H1 (cell line): ENCODE measurements at regions of chr17 and their contacts with region 1.

Region 1: GRCh38 chr17:7280519-7281429 is 744 bp upstream of the SLC2A4 start:
- DNase-seq: peak; percentile 87 to 97
- H3K4me3 ChIP-seq: peak overlapping the region; percentile 14 to 77 (median 61)
- H3K27ac ChIP-seq: no peak overlapping the region
- H3K4me1 ChIP-seq: peaks cover 0 to 20% (median 8%) of the 10 kb centered on the region in 4 experiments; a peak in 5 of 7 replicates
- H3K27me3 ChIP-seq: peaks cover 0 to 13% (median 7%) of the 10 kb centered on the region in 4 experiments; a peak in 6 of 7 replicates
- CTCF ChIP-seq: peak; percentile 94 to 100 (median 97)
- EP300 ChIP-seq: peak in 1 of 2 experiments; percentile 10; a peak in 1 of 3 replicates
- POLR2A ChIP-seq: peak in 1 of 2 experiments; percentile 79; a peak in 2 of 3 replicates
- RAD21 ChIP-seq: peak; percentile 95 to 96

Region 2: DNA sequence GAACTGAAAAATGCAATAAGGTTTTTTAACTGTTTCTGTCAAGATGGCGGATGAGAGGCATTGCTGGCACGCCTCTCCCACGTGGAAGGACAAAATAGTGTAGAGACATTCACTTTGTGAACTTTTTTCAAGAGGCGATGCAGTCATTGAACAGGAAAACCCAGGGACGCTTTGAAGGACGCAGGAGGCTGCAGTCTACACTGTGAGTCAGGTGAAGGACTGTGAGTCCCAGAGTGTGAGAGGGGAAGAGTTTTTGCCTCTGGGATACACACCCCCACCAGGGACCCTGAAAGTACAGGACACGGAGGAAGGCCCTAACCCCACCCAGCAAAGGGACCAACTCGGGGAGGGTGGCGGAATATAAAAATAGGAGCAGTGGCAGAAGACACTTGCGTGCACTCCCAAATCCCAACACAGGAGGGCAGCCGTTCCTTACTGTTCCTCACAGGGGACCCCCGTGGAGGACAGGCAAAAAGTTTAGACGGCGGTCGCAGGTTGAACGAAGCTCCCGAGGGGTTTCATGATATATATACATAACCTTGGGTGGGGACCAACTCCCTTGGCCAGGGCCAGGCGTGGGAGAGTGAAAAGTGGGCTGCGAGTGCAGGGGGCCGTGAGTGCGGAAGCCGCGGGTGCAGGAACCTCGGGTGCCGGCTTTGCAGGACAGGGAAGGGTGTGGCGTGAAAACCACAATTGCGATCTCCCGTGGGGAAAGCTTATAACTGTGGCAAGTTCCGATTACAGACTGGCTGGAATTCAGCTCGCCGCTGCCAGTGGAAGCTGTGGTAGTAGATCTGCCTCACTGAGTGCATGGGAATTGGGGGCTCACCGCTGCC is 366.9 kb before region 1 on chr17:
- CTCF ChIA-PET with region 1: no interaction called
- POLR2A ChIA-PET with region 1: no interaction called
- DNase-seq: peak; percentile 34 to 88
- H3K4me3 ChIP-seq: no peak overlapping the region
- H3K27ac ChIP-seq: no peak overlapping the region
- H3K4me1 ChIP-seq: no peaks in the 10 kb centered on the region
- H3K27me3 ChIP-seq: no peaks in the 10 kb centered on the region; a peak in 2 of 7 replicates
- CTCF ChIP-seq: peak; percentile 68 to 81 (median 77)
- EP300 ChIP-seq: no peak
- POLR2A ChIP-seq: no peak
- RAD21 ChIP-seq: peak; percentile 90

Region 3: DNA sequence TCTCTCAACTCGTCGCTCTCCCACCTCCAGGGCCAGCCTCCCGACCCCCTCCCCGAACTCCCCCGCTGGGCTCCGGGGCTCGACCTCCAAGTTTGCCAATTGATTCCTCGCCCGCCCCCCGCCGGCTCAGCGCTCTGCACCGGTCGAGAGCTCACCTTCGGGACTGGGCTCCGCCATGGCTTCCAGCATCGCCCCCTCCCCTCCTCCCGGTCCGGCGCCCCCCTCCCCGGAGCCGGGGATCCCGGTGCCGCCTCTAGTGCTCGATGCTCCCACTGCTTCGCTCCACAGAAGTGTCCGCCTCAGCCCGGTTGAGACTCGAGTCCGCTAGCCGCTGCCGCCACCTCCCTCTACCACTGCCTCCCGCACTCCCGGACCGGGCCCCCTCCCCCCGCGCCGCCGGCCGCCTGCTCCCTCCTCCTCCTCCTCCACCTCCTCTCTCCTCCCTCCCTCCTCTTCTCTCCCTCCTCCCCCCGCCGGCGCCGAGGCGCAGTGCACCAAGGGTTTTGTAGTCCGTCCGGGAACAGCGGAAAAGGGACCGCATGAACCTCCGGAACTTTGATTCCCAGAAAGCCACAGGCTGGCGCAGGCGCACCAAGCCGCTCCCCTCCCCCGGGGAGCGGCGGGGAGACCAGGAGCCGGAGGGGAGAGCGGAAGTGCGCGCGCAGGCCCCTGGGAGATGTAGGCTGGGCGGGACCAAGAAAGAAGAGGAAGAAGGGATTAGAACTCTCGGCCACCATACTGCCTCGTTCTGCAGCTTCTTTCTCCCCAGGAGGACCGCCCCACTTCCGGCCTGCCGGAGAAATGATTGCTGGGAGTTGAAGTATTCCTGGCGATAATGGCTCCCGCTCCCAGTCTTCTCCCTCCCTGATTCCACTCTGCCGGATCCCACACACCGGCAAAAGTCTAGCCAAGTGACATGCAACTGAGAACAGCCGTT is 41.4 kb before region 1 on chr17 and contains the start of gene PHF23:
- CTCF ChIA-PET with region 1: interaction called, 8 read pairs
- POLR2A ChIA-PET with region 1: interaction called, 21 read pairs
- DNase-seq: peak; percentile 94 to 99
- H3K4me3 ChIP-seq: peak within 1 kb of the TSS; percentile 91 to 97 (median 94)
- H3K27ac ChIP-seq: peak within 1 kb of the TSS; percentile 63
- H3K4me1 ChIP-seq: peaks cover 5 to 24% (median 12%) of the 10 kb centered on the region in 4 experiments
- H3K27me3 ChIP-seq: no peaks in the 10 kb centered on the region
- CTCF ChIP-seq: no peak
- EP300 ChIP-seq: no peak
- POLR2A ChIP-seq: peak; percentile 27 to 36; a peak in 1 of 3 replicates
- RAD21 ChIP-seq: no peak
- total RNA-seq, gene PHF23: 62.8 and 65.1 TPM in 2 replicates

Region 4: GRCh38 chr17:7261172-7261927 is 19.4 kb before region 1 on chr17:
- CTCF ChIA-PET with region 1: interaction called, 11 read pairs
- POLR2A ChIA-PET with region 1: interaction called, 69 read pairs
- DNase-seq: peak in 1 of 2 experiments; percentile 86
- H3K4me3 ChIP-seq: peak overlapping the region; percentile 93 to 98 (median 96)
- H3K27ac ChIP-seq: peak overlapping the region; percentile 91
- H3K4me1 ChIP-seq: peaks cover 4 to 15% (median 6%) of the 10 kb centered on the region in 4 experiments; a peak in 6 of 7 replicates
- H3K27me3 ChIP-seq: no peaks in the 10 kb centered on the region
- CTCF ChIP-seq: no peak
- EP300 ChIP-seq: peak in 1 of 2 experiments; percentile 96; a peak in 2 of 3 replicates
- POLR2A ChIP-seq: peak; percentile 72 to 91
- RAD21 ChIP-seq: no peak

Region 5: GRCh38 chr17:7296189-7296902 is 15.6 kb after region 1 on chr17:
- CTCF ChIA-PET with region 1: interaction called, 46 read pairs
- POLR2A ChIA-PET with region 1: interaction called, 94 read pairs
- DNase-seq: peak in 1 of 2 experiments; percentile 96
- H3K4me3 ChIP-seq: peak overlapping the region in 1 of 4 experiments; percentile 51; a peak in 2 of 8 replicates
- H3K27ac ChIP-seq: no peak overlapping the region
- H3K4me1 ChIP-seq: peaks cover 0 to 14% (median 5%) of the 10 kb centered on the region in 4 experiments; a peak in 5 of 7 replicates
- H3K27me3 ChIP-seq: peaks cover 3 to 11% (median 9%) of the 10 kb centered on the region in 4 experiments
- CTCF ChIP-seq: peak; percentile 84 to 96 (median 90)
- EP300 ChIP-seq: peak in 1 of 2 experiments; percentile 83; a peak in 2 of 3 replicates
- POLR2A ChIP-seq: no peak
- RAD21 ChIP-seq: peak; percentile 93 to 95

Region 6: DNA sequence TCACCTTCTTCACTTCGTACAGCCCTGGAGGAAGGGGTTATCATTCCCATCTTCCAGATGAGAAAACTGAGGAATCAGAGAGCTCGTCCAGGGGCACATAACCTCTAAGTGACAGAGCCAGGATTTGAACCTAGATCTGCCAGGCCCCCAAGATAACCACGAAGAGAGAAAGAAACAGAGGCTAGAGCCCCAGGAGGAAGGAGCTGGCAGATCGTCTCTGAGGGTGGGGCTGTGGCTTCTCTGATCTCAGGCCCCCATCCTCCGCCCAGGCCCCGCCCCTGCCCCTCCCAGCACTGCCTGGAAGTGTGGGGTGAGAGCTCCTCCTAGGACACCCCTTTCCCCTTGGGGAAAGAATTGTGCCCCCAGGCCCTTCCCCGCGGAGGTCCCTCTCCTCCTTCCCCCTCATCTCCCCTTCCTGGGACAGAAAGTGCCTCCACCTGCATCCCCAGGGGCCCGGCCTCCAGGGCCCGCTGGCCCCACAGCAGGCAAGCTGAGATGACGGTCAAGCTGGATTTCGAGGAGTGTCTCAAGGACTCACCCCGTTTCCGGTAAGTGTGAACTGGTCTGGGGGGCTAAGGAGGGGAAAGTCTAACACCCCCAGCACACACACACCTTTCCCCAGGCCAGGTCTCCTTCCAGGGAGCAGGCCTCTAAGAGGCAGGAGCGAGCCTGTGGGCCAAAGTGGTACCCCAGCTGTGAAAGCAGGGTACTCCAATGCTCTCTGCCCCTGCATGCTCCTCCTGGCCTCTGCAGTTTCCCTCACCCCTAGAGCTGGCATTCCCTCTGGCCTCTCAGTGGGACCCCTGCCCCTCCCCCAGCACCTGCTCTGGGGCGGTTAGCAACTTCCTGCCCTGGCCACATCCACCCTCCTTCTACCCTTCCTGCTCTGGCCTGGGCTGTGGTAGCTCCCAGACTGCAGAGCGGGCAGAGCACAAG is 55.7 kb after region 1 on chr17 and contains the start of gene ACAP1:
- CTCF ChIA-PET with region 1: interaction called, 6 read pairs
- POLR2A ChIA-PET with region 1: interaction called, 16 read pairs
- DNase-seq: peak; percentile 44 to 79
- H3K4me3 ChIP-seq: peak within 1 kb of the TSS in 3 of 4 experiments; percentile 10 to 52 (median 32); a peak in 6 of 8 replicates
- H3K27ac ChIP-seq: peak within 1 kb of the TSS; percentile 51; the same call in 1 of the 2 replicates
- H3K4me1 ChIP-seq: peaks cover 3 to 16% (median 14%) of the 10 kb centered on the region in 4 experiments
- H3K27me3 ChIP-seq: no peaks in the 10 kb centered on the region
- CTCF ChIP-seq: no peak
- EP300 ChIP-seq: peak in 1 of 2 experiments; percentile 52; a peak in 1 of 3 replicates
- POLR2A ChIP-seq: peak in 1 of 2 experiments; percentile 32; a peak in 2 of 3 replicates
- RAD21 ChIP-seq: peak in 1 of 2 experiments; percentile 16; a peak in 1 of 4 replicates
- total RNA-seq, gene ACAP1: 45.1 and 49.2 TPM in 2 replicates